ENCODE measurements at regions of chr5 and their contacts with region 1.

Region 1: DNA sequence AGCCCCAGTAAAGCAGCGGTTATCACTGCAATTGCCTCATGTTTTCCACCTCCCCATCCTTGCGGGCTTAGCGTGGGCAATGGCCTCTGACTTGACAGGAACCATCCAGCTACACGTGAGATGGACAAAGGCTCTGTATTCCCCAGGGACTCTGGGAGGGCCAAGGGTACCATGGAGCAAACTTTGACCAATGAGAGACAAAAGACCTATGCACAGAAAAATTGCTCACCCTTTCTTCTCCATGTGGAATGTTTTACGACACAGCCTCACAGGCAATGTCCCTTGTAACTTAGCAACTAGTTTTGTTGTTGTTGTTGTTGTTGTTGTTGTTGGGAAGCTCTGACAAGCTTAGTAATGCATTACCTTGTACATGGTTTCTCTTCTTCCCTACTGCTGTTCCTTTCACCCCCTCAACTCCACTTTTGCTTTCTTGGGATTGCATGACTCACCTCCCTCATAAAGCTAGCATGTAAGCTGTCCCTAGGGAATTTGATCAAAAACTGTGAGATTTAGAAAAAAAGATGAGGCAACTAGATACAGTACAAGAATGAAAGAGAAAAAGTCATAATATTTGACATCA is 550.9 kb downstream of the RAB3C start:
- DNase-seq: no peak
- ATAC-seq: no peak
- H3K4me3 ChIP-seq: no peak overlapping the region
- H3K4me3 Mint-ChIP-seq: no peak overlapping the region
- H3K27ac ChIP-seq: no peak overlapping the region
- H3K27ac Mint-ChIP-seq: peak overlapping the region; percentile 35
- H3K4me1 ChIP-seq: peaks cover 10% of the 10 kb centered on the region
- H3K4me1 Mint-ChIP-seq: peaks cover 34% of the 10 kb centered on the region
- H3K27me3 ChIP-seq: no peaks in the 10 kb centered on the region
- H3K27me3 Mint-ChIP-seq: no peaks in the 10 kb centered on the region
- CTCF ChIP-seq: no peak

Region 2: GRCh38 chr5:59143926-59144333 is 10.2 kb after region 1 on chr5:
- CTCF ChIA-PET with region 1: interaction called, 5 read pairs
- POLR2A ChIA-PET with region 1: interaction called, 3 read pairs
- intact Hi-C with region 1: loop called (anchors 2 kb)
- DNase-seq: no peak
- ATAC-seq: no peak
- H3K4me3 ChIP-seq: no peak overlapping the region
- H3K4me3 Mint-ChIP-seq: no peak overlapping the region
- H3K27ac ChIP-seq: no peak overlapping the region
- H3K27ac Mint-ChIP-seq: no peak overlapping the region
- H3K4me1 ChIP-seq: no peaks in the 10 kb centered on the region
- H3K4me1 Mint-ChIP-seq: peaks cover 4% of the 10 kb centered on the region
- H3K27me3 ChIP-seq: no peaks in the 10 kb centered on the region
- H3K27me3 Mint-ChIP-seq: no peaks in the 10 kb centered on the region
- CTCF ChIP-seq: no peak

Region 3: DNA sequence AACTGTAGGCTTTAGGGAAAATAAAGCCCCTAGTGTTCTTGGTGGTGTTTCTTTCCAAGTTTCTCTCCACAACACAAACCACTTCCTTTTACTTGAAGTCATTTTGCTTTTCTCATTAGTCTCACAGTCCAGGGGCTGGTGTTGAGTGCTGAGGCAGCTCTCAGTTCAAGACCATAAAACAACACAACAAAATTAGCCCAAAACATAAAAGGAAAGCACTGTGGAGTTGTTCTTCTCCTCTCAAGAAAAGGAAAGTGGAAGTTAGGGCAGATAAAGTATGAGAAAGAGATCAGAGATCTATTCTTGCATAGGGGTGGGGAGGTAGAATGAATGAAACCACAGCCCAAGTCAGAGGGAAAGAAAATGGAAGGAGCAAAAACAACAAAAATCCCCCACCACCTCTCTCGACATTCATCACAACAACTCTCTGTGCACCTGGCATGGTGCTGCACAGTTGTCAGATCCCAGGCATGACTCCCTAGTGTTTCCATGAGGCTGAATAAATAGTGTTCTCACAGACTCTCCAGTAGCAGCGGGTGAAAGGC is 19.0 kb after region 1 on chr5:
- CTCF ChIA-PET with region 1: interaction called, 3 read pairs
- POLR2A ChIA-PET with region 1: interaction called, 3 read pairs
- intact Hi-C with region 1: loop called in 1 of 2 experiments (anchors 2 kb)
- DNase-seq: peak in 1 of 9 experiments; percentile 52
- ATAC-seq: no peak
- H3K4me3 ChIP-seq: no peak overlapping the region
- H3K4me3 Mint-ChIP-seq: no peak overlapping the region
- H3K27ac ChIP-seq: no peak overlapping the region
- H3K27ac Mint-ChIP-seq: peak overlapping the region; percentile 71
- H3K4me1 ChIP-seq: peaks cover 14% of the 10 kb centered on the region
- H3K4me1 Mint-ChIP-seq: peaks cover 26% of the 10 kb centered on the region
- H3K27me3 ChIP-seq: no peaks in the 10 kb centered on the region
- H3K27me3 Mint-ChIP-seq: no peaks in the 10 kb centered on the region
- CTCF ChIP-seq: no peak

Measured in CD8-positive, alpha-beta T cell (primary cell).